Activated B cell treated with CpG ODN at 0.5 μM for 24 hours (primary cell): ENCODE measurements at regions of chr12 and their contacts with region 1.

Region 1: DNA sequence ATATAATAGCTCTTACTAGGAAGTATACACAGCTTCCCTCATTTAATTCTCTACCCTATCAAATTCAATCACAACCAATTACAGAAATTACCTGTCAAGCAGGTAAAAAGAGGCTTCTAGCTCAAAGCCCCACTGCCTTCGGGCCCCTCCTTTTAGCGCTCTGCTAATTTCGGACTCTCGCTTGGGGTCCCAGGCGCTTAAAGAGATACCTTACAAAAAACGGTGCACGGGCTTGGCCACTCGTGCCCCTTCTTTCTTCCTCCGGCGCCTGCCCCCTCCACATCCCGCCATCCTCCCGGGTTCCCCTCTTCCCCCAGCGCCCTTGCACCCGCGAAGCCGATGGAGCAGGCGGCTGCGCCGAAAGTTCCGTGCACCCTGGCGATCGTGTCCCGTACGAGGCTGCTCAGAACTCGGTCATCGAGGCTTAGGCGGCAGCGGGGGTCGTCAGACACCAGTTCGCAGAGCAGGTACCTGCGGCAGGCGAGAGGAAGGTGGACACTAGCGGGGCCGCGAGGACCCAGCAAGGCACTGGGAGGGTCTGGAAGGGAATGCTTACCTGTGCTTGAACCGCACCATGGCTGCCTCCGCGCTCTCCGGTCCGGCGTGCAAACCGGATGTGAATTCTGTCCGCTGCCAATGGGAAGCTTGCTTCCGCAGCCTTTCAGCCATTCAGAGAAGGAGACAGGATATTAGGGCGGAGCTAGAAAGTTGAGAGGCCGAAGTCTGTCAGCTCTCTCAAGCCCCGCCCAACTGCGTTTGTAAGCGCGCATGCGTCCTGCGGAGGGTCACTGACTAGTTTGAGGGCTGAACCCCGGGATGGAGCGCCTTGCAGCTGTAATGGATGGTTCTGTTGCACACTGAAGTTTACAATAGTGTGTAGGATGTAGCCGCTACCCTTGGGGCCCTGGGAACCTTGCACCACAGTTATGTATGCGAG is at the start of gene POP5:
- DNase-seq: peak; percentile 84
- ATAC-seq: peak; percentile 97
- H3K4me3 Mint-ChIP-seq: peak within 1 kb of the TSS; percentile 98
- H3K27ac Mint-ChIP-seq: peak within 1 kb of the TSS; percentile 86
- H3K4me1 Mint-ChIP-seq: peaks cover 38% of the 10 kb centered on the region
- H3K27me3 Mint-ChIP-seq: peaks cover 10% of the 10 kb centered on the region
- CTCF ChIP-seq: no peak
- total RNA-seq, gene POP5: 77.5 and 78.4 TPM in 2 replicates

Region 2: DNA sequence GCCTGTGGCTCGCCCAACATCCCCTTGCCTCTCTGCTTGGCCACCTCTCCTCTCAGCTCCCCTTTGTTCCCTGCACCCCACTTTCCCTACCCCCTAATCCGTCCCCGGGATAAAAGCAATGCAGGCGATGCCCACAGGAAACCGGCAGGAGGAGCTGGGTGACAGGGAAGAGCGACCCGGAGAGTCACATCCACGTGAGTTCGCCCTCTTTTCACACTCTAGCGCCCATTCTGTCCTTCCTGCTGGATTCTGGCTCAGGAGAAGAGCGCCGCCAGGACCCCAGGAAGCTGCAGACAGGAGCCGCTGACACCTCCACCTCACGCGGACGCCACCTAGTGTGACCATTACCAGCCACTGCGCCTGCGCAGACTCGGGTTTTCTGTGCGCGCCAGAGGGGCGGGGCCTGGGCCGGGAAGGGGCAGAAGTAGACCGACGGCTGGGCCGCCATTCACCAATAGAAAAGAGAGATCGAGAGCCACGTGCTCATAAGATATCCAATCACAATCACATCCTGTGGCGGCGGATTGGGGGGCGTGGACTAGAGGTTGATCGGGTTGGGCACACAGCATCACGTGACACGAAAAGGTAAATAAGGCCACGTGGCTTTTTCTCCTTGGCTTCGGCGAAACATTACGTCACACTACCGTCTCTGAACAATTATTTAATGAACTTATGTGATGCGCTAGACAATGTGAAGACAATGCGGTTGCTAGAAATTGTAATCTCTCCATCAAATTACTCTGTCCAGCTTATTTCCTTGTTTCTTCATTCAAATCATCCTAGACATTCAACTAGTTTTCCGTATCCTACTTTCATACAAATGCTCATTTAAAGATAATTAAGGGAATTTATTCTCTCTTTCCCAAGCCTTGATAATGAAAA is 263.6 kb before region 1 on chr12:
- CTCF ChIA-PET with region 1: no interaction called
- POLR2A ChIA-PET with region 1: no interaction called
- intact Hi-C with region 1: loop called (anchors 5 kb)
- DNase-seq: peak; percentile 100
- ATAC-seq: peak; percentile 99
- H3K4me3 Mint-ChIP-seq: peak overlapping the region; percentile 88
- H3K27ac Mint-ChIP-seq: peak overlapping the region; percentile 90
- H3K4me1 Mint-ChIP-seq: peaks cover 13% of the 10 kb centered on the region
- H3K27me3 Mint-ChIP-seq: peaks cover 1% of the 10 kb centered on the region
- CTCF ChIP-seq: no peak

Region 3: GRCh38 chr12:120534203-120534702 is 46.8 kb before region 1 on chr12 and contains the start of gene RNF10:
- CTCF ChIA-PET with region 1: interaction called, 3 read pairs
- POLR2A ChIA-PET with region 1: interaction called, 8 read pairs
- intact Hi-C with region 1: loop called (anchors 2 kb)
- DNase-seq: peak; percentile 66
- ATAC-seq: peak; percentile 68
- H3K4me3 Mint-ChIP-seq: peak within 1 kb of the TSS; percentile 93
- H3K27ac Mint-ChIP-seq: peak within 1 kb of the TSS; percentile 91
- H3K4me1 Mint-ChIP-seq: peaks cover 60% of the 10 kb centered on the region
- H3K27me3 Mint-ChIP-seq: no peaks in the 10 kb centered on the region
- CTCF ChIP-seq: no peak
- total RNA-seq, gene RNF10: 180 and 200 TPM in 2 replicates

Region 4: DNA sequence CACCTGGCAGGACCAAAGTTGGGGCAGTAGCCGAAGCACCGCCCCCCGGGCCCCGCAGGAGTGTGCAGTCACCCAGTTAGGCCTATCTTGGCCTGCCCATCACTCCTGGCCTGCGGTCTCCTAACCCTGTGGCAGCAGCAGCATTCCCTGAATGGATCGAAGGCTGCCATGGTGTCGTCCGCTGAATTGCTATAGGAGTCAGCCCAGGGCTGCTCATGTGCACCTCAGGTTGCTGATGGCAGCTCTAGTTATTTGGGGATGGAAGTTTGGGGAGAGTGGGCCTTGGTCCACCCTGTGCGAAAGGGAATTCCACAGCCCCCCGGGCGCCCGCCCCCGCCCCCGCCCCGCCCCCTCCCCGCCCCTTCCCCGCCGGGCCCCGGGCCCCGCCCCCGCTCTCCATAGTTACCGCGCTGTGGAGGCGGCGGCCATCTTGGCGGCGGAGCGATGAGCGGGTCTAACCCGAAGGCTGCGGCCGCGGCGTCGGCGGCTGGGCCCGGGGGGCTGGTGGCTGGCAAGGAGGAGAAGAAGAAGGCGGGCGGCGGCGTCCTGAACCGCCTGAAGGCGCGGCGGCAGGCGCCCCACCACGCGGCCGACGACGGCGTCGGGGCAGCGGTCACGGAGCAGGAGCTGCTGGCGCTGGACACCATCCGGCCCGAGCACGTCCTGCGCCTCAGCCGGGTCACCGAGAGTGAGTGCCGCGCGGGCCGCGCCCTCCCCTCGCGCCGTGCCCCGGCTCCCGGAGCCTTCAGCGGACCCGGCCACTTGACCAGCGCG is 129.2 kb after region 1 on chr12 and contains the start of gene UNC119B:
- CTCF ChIA-PET with region 1: interaction called, 6 read pairs
- POLR2A ChIA-PET with region 1: no interaction called
- intact Hi-C with region 1: loop called (anchors 1 kb)
- DNase-seq: peak; percentile 71
- ATAC-seq: peak; percentile 92
- H3K4me3 Mint-ChIP-seq: peak within 1 kb of the TSS; percentile 89
- H3K27ac Mint-ChIP-seq: peak within 1 kb of the TSS; percentile 82
- H3K4me1 Mint-ChIP-seq: peaks cover 29% of the 10 kb centered on the region
- H3K27me3 Mint-ChIP-seq: no peaks in the 10 kb centered on the region
- CTCF ChIP-seq: no peak
- total RNA-seq, gene UNC119B: 17.3 and 18.5 TPM in 2 replicates

Region 5: GRCh38 chr12:120971299-120972179 is 390.5 kb after region 1 on chr12:
- CTCF ChIA-PET with region 1: interaction called, 30 read pairs
- POLR2A ChIA-PET with region 1: interaction called, 11 read pairs
- intact Hi-C with region 1: loop called (anchors 1 kb)
- DNase-seq: no peak
- ATAC-seq: peak; percentile 94
- H3K4me3 Mint-ChIP-seq: no peak overlapping the region
- H3K27ac Mint-ChIP-seq: no peak overlapping the region
- H3K4me1 Mint-ChIP-seq: peaks cover 8% of the 10 kb centered on the region
- H3K27me3 Mint-ChIP-seq: peaks cover 3% of the 10 kb centered on the region
- CTCF ChIP-seq: no peak

Region 6: DNA sequence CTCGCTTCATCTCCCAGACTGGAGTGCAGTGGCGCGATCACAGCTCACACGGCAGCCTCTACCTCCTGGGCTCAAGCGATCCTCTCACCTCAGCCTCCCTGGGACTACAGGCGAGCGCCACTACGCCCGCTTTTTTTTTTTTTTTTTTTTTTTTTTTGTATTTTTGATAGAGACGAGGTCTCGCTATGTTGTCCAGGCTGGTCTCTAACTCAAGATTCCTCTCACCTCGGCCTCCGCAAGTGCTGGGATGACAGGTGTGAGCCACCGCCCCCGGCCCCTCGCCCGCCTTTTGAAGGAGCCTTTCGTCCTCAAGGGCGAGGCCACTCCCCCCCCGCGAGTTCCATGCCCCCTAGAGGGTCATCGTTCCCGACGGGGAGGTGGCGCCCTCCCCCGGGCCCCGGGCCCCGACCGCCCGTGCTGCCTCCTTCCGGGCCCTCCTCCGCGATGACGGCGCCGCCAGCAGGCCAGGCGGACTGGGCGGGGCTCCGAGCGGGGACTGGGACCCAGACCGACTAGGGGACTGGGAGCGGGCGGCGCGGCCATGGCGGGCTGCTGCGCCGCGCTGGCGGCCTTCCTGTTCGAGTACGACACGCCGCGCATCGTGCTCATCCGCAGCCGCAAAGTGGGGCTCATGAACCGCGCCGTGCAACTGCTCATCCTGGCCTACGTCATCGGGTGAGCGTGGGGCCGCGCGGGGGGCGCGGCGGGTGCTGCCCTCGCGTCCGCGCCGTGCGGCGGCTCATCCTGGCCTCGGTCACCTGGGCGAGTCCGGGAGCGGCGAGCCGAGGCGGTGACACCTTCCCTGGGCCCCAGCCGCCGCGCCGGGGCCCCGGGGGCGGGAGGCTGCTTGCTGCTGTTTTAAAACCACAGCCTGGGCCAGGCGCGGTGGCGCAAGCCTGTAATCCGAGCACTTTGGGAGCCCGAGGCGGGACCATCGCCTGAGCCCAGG is 628.8 kb after region 1 on chr12 and contains the start of gene P2RX4:
- CTCF ChIA-PET with region 1: no interaction called
- POLR2A ChIA-PET with region 1: no interaction called
- intact Hi-C with region 1: loop called (anchors 10 kb)
- DNase-seq: peak; percentile 80
- ATAC-seq: peak; percentile 85
- H3K4me3 Mint-ChIP-seq: peak within 1 kb of the TSS; percentile 83
- H3K27ac Mint-ChIP-seq: peak within 1 kb of the TSS; percentile 85
- H3K4me1 Mint-ChIP-seq: peaks cover 24% of the 10 kb centered on the region
- H3K27me3 Mint-ChIP-seq: no peaks in the 10 kb centered on the region
- CTCF ChIP-seq: no peak
- total RNA-seq, gene P2RX4: 17.0 and 19.5 TPM in 2 replicates